Esophagus muscularis mucosa (tissue), 4 donors: ENCODE measurements at regions of chr16 and their contacts with region 1.

Region 1: GRCh38 chr16:6193718-6194117 is 1096.1 kb upstream of the EEF2KMT start:
- DNase-seq: no peak
- H3K4me3 ChIP-seq: no peak overlapping the region
- H3K27ac ChIP-seq: no peak overlapping the region
- H3K4me1 ChIP-seq: no peaks in the 10 kb centered on the region
- H3K27me3 ChIP-seq: no peaks in the 10 kb centered on the region
- CTCF ChIP-seq: no peak
- EP300 ChIP-seq: no peak
- POLR2A ChIP-seq: no peak

Region 2: DNA sequence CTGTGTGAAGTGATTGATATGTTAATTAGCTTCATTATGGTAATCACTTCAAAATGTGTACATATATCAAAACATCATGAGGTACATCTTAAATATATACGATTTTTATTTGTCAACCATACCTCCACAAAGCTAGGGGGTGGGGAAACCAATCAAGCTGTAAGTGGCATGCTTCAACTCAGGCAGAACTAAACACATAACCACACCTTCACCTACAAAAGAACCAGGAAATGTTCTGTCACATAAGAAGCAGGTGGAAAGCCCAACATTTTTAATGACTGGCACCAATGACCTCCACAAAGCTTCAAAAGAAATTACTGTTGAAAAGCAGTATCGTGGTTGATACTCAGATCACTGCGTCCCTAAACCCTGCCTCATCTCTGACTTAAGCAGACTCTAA is 228.4 kb before region 1 on chr16:
- intact Hi-C with region 1: no loop called
- DNase-seq: no peak
- H3K4me3 ChIP-seq: no peak overlapping the region
- H3K27ac ChIP-seq: no peak overlapping the region
- H3K4me1 ChIP-seq: no peaks in the 10 kb centered on the region
- H3K27me3 ChIP-seq: no peaks in the 10 kb centered on the region
- CTCF ChIP-seq: no peak
- EP300 ChIP-seq: no peak
- POLR2A ChIP-seq: no peak

Region 3: DNA sequence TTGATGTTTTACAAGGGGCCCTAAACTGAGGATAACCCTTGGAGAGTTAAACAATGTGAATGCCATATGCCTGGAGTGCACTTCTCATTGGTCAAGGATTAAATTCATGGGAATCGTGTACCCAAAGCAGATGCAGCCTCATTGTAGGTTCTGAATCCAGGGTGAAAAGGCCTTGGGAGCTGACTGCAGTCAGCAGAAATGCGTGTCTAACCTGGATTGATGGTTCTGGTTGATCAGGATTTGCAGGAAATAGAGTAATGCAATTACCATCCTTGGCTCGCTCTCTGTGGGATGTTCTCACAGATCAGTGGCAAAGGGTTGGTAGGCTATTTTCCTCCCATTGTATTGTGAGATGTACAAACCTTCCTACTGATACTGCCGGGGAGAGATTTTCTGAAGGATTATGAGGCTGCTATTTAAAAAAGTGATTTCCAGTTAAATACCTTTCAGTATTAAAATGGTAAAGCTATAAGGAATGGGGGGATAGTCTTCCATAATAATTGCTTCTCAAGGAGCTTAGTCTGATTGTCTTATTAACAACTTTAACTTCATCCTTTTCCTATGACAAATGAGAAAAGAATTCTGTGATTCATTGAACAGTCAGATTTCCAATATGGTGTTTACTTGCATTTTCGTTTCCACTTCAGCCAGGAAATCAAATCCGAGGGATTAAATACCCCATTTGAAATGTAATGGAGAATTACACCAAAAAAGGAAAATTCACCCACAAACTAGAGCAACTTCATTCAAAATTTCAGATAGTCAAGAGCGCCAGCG is 68.0 kb before region 1 on chr16:
- intact Hi-C with region 1: loop called (anchors 10 kb)
- DNase-seq: no peak
- H3K4me3 ChIP-seq: no peak overlapping the region
- H3K27ac ChIP-seq: no peak overlapping the region
- H3K4me1 ChIP-seq: no peaks in the 10 kb centered on the region
- H3K27me3 ChIP-seq: no peaks in the 10 kb centered on the region
- CTCF ChIP-seq: no peak
- EP300 ChIP-seq: no peak
- POLR2A ChIP-seq: no peak